ENCODE measurements at regions of chr11 and their contacts with region 1.

Region 1: GRCh38 chr11:575996-576768 is at the start of gene PHRF1:
- DNase-seq: peak; percentile 93
- H3K4me3 Mint-ChIP-seq: peak within 1 kb of the TSS; percentile 98
- H3K27ac Mint-ChIP-seq: peak within 1 kb of the TSS; percentile 99
- H3K4me1 Mint-ChIP-seq: peaks cover 31% of the 10 kb centered on the region
- H3K27me3 Mint-ChIP-seq: peaks cover 5% of the 10 kb centered on the region
- total RNA-seq, gene PHRF1: 53.7 and 54.0 TPM in 2 replicates

Region 2: DNA sequence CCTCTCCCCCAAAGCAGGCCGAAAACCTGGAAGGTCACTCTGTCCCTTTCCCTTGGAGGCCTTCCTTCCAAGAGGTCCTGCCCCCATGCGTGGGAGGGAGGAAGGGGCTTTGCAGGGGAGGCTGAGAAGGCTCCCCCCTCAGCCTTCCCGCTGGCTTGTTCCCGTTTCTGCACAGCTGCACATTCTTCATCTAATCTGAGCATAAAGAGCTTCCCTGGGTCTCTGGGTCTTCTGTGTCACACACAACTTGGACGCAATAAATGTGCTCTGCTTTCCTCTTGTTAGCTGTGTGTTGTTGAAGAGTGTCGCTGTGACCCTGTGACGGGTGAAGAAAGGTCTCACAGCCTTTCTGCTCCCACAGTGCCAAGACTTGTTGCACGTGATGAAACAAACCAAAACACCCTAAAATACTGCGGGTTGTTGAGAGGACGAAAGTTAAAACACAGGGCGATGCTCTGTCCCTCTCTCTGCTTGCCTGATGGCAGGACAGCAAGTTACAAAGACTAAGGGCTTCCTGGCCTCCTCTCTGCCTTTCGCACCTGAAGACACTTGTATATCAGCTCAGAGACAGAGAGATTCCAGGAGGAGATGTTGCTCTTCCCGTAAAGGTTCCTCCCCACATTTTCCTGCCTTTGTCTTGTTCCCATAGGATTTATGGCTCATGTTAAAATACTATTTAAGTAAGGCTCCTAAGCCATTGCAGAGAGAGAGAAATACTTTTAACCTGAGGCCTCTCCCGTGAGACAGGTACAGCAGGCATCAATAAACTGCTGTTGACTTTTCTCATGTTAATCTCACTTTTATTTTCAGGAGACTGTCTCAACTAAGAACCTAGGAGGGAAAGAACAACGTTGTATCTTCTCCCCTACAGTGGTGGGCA is 240.2 kb before region 1 on chr11:
- intact Hi-C with region 1: no loop called
- DNase-seq: no peak
- H3K4me3 Mint-ChIP-seq: no peak overlapping the region
- H3K27ac Mint-ChIP-seq: no peak overlapping the region
- H3K4me1 Mint-ChIP-seq: peaks cover 25% of the 10 kb centered on the region
- H3K27me3 Mint-ChIP-seq: peaks cover 2% of the 10 kb centered on the region

Region 3: GRCh38 chr11:615504-616319 is 39.5 kb after region 1 on chr11 and contains the start of gene IRF7:
- intact Hi-C with region 1: loop called (anchors 5 kb)
- DNase-seq: peak; percentile 85
- H3K4me3 Mint-ChIP-seq: peak within 1 kb of the TSS; percentile 85
- H3K27ac Mint-ChIP-seq: peak within 1 kb of the TSS; percentile 69
- H3K4me1 Mint-ChIP-seq: peaks cover 8% of the 10 kb centered on the region
- H3K27me3 Mint-ChIP-seq: no peaks in the 10 kb centered on the region
- total RNA-seq, gene IRF7: 26.8 and 30.3 TPM in 2 replicates

Region 4: GRCh38 chr11:777288-778255 is 201.4 kb after region 1 on chr11 and contains the start of gene GATD1:
- intact Hi-C with region 1: no loop called
- DNase-seq: peak; percentile 93
- H3K4me3 Mint-ChIP-seq: peak within 1 kb of the TSS; percentile 88
- H3K27ac Mint-ChIP-seq: peak within 1 kb of the TSS; percentile 81
- H3K4me1 Mint-ChIP-seq: peaks cover 19% of the 10 kb centered on the region
- H3K27me3 Mint-ChIP-seq: no peaks in the 10 kb centered on the region
- total RNA-seq, gene GATD1: 68.0 and 75.2 TPM in 2 replicates

Measured in activated T-helper 2 cell treated with anti-CD3 and anti-CD28 coated beads, Interferon-gamma antibody, Interleukin-2, Interleukin-4, amounts not matched to agents 10 μg/mL and 5 μg/mL and 100 μg/mL, durations not matched to agents 14 hours and 24 hours and 36 hours (primary cell).